ENCODE measurements at regions of chr2 and their contacts with region 1.

Region 1: GRCh38 chr2:107437807-107438206 is 388.9 kb upstream of the RGPD4 start:
- DNase-seq: no peak
- H3K4me3 ChIP-seq: no peak overlapping the region
- H3K27ac ChIP-seq: no peak overlapping the region
- H3K4me1 ChIP-seq: no peaks in the 10 kb centered on the region
- H3K27me3 ChIP-seq: no peaks in the 10 kb centered on the region
- CTCF ChIP-seq: no peak
- POLR2A ChIP-seq: no peak

Region 2: GRCh38 chr2:106833256-106833655 is 604.6 kb before region 1 on chr2:
- intact Hi-C with region 1: loop called (anchors 5 kb)
- DNase-seq: no peak
- H3K4me3 ChIP-seq: no peak overlapping the region
- H3K27ac ChIP-seq: no peak overlapping the region
- H3K4me1 ChIP-seq: no peaks in the 10 kb centered on the region
- H3K27me3 ChIP-seq: no peaks in the 10 kb centered on the region
- CTCF ChIP-seq: no peak
- POLR2A ChIP-seq: no peak

Measured in breast epithelium (tissue), 4 donors.